IMR-90 (cell line): ENCODE measurements at regions of chr2 and their contacts with region 1.

Region 1: DNA sequence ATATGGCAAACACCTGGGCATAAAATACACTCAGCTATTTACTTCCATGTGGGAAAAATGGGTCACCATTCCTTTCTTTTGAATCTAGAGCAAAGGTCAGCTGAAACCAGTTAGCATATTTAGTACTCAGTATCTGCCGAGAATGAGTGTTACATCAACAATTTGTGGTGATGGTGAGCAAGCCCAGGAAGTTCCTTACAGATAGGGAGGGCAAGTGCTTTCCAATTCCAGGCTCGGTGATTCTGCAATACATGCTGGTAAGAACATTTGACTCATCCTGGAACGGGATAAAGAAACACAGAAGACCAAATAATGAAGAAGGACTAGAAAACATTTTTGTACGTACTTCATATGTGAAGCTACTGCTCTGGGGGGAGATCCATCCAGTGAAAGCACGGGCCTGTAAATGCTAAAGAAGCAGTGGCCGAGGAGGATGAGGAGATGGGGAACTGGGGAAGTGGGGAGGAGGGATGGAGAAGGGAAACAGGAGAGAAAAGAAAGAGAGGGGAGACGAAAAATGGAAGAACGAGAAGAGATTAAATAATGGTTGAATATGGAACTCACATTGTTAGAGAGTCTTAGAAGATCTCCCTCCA is 251.9 kb downstream of the TTC32 start:
- DNase-seq: peak; percentile 100
- ATAC-seq: peak; percentile 89
- H3K4me3 ChIP-seq: no peak overlapping the region
- H3K27ac ChIP-seq: peak overlapping the region; percentile 52; the same call in 1 of the 2 replicates
- H3K4me1 ChIP-seq: peaks cover 8% of the 10 kb centered on the region
- H3K27me3 ChIP-seq: peaks cover 2% of the 10 kb centered on the region; the same call in 1 of the 2 replicates
- CTCF ChIP-seq: no peak
- POLR2A ChIP-seq: no peak
- RAD21 ChIP-seq: no peak

Region 2: GRCh38 chr2:19403785-19404184 is 246.1 kb before region 1 on chr2:
- CTCF ChIA-PET with region 1: no interaction called
- POLR2A ChIA-PET with region 1: no interaction called
- dilution Hi-C with region 1: no loop called
- in situ Hi-C with region 1: no loop called
- intact Hi-C with region 1: no loop called
- DNase-seq: no peak
- ATAC-seq: no peak
- H3K4me3 ChIP-seq: no peak overlapping the region
- H3K27ac ChIP-seq: no peak overlapping the region
- H3K4me1 ChIP-seq: no peaks in the 10 kb centered on the region
- H3K27me3 ChIP-seq: peaks cover 4% of the 10 kb centered on the region
- CTCF ChIP-seq: no peak
- POLR2A ChIP-seq: no peak
- RAD21 ChIP-seq: no peak

Region 3: GRCh38 chr2:19540739-19541525 is 109.0 kb before region 1 on chr2:
- CTCF ChIA-PET with region 1: no interaction called
- POLR2A ChIA-PET with region 1: interaction called, 3 read pairs
- dilution Hi-C with region 1: no loop called
- in situ Hi-C with region 1: no loop called
- intact Hi-C with region 1: loop called (anchors 5 kb)
- DNase-seq: peak; percentile 91
- ATAC-seq: peak; percentile 83
- H3K4me3 ChIP-seq: no peak overlapping the region
- H3K27ac ChIP-seq: peak overlapping the region; percentile 51; the same call in 1 of the 2 replicates
- H3K4me1 ChIP-seq: peaks cover 4% of the 10 kb centered on the region
- H3K27me3 ChIP-seq: no peaks in the 10 kb centered on the region
- CTCF ChIP-seq: no peak
- POLR2A ChIP-seq: no peak
- RAD21 ChIP-seq: no peak

Region 4: DNA sequence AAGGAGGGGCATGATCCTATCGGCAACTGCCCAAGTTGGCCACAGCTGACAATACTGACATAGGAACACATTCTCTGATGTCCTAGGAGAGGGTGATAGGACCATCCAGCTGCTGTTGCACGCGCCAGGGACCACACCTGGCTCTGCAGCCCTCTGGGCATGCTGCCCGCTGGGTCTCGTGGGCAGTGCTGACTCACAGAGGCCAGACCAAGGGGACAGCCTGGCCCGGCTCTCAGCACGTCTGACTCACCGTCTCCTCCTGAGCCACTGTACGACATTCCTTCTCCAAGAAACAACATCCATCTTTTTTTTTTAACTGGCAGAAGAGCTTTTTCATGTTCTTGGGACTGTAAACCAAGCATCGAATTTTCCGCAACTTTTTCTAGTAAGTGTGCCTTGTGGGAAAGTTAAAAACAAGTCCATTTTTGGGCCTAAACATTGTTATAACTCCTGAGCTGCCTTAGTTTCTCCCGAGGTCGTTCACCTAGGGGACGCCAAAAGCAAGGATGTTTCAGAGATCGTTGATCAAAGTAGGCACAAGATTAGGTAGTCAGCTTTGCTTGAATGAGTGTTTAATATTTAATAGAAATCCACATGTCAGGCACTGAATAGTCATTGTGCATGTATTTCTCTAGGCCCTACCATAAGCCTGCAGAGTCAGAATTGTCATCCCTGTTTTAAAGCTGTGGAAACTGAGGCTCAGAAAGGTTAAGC is 151.6 kb after region 1 on chr2:
- CTCF ChIA-PET with region 1: no interaction called
- POLR2A ChIA-PET with region 1: no interaction called
- dilution Hi-C with region 1: no loop called
- in situ Hi-C with region 1: no loop called
- intact Hi-C with region 1: loop called (anchors 1 kb)
- DNase-seq: peak; percentile 98
- ATAC-seq: peak; percentile 95
- H3K4me3 ChIP-seq: no peak overlapping the region
- H3K27ac ChIP-seq: peak overlapping the region; percentile 55; the same call in 1 of the 2 replicates
- H3K4me1 ChIP-seq: peaks cover 18% of the 10 kb centered on the region
- H3K27me3 ChIP-seq: peaks cover 4% of the 10 kb centered on the region; the same call in 1 of the 2 replicates
- CTCF ChIP-seq: no peak
- POLR2A ChIP-seq: no peak
- RAD21 ChIP-seq: no peak